H1 (cell line): ENCODE measurements at regions of chr11 and their contacts with region 1.

Region 1: DNA sequence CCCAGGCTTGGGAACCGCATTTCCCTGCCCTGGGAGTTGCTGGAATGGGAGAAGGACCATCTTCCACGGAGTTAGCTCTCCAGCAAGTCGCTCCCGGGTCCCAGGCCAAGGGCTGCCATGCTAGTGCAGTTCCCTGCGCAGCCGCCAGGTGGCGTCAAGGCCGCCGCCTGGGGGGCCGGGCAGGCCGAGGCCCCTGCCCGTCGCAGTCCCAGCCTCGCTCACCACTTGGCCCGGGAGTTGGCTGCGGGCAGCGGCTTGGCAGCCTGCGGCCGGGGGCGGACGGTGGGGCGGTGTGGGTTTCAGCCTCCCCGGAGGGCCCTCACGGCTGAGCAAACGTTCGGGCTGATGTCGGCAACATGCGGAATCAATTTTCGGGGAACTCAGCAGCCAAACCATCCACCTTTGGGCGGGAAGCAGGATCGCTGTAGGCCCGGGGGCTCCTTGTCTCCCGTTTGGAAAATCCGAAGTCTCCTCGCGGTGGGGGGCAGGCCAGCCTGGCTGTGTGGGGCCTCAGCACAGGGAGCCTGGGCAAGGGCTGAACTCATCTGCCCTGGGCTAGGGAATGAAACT is 415.1 kb downstream of the SOX6 start:
- DNase-seq: peak; percentile 65 to 94
- H3K4me3 ChIP-seq: no peak overlapping the region; a peak in 1 of 8 replicates
- H3K27ac ChIP-seq: no peak overlapping the region
- H3K4me1 ChIP-seq: no peaks in the 10 kb centered on the region; a peak in 1 of 7 replicates
- H3K27me3 ChIP-seq: peaks cover 0 to 11% (median 8%) of the 10 kb centered on the region in 4 experiments; a peak in 3 of 7 replicates
- CTCF ChIP-seq: peak; percentile 92 to 96 (median 96)
- EP300 ChIP-seq: peak in 1 of 2 experiments; percentile 48; a peak in 1 of 3 replicates
- POLR2A ChIP-seq: no peak
- RAD21 ChIP-seq: peak; percentile 82 to 90

Region 2: DNA sequence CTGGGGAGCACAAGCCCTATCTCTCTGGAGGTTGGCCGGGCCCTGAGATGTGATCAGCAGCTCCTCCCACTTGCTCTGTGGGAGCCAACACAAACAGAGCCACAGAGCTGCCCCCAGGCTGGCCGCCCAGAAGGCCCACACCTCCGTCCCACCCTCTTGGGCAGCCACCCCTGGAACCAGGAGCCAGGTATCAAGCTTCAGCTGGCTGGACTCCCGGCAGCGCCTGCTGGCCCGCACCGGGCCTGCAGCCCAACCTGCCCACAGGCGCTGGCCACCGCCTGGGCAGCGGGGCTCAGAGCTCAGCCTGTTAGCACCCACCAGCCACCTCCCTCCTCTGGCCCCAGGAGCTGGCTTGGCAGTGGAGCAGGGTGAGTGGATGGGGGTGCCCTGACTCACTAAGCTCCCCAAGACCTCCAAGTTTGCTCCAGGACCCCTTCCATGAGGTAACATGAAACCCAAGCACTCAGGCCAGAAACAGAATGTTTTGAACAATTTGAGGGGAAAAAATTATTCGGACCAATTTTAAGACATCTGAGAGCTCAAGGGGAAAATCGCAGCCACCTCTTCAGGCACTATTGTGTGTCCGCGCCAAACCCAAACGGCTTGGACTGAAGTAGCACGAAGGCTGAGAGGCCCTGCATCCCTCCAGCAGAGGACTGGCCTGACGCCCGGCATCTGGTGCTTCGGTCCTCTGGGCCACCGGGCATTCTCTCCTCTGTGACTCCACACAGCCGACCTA is 35.8 kb before region 1 on chr11:
- CTCF ChIA-PET with region 1: interaction called, 10 read pairs
- POLR2A ChIA-PET with region 1: no interaction called
- DNase-seq: no peak
- H3K4me3 ChIP-seq: no peak overlapping the region
- H3K27ac ChIP-seq: no peak overlapping the region
- H3K4me1 ChIP-seq: no peaks in the 10 kb centered on the region; a peak in 1 of 7 replicates
- H3K27me3 ChIP-seq: no peaks in the 10 kb centered on the region
- CTCF ChIP-seq: no peak
- EP300 ChIP-seq: no peak
- POLR2A ChIP-seq: no peak
- RAD21 ChIP-seq: no peak

Region 3: DNA sequence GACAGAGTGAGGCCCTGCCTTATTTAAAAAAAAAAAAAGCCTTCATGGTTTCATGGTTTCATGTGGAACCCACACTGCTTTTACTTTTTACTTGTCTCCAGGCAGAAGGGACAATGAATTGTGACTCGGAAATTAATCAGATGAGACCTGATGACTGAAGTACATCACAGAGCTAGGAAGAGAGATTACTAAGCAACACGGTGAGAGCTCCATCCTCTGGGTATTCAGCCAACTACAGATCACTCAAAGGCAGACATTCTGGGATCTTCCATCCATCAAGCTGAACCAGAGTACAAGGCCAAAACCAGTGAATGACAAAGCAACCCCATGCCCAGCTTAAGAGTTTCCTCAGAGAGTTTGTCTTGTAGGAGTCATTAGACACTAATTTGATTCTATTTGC is 18.1 kb before region 1 on chr11:
- CTCF ChIA-PET with region 1: interaction called, 14 read pairs
- POLR2A ChIA-PET with region 1: no interaction called
- DNase-seq: no peak
- H3K4me3 ChIP-seq: no peak overlapping the region
- H3K27ac ChIP-seq: no peak overlapping the region
- H3K4me1 ChIP-seq: no peaks in the 10 kb centered on the region
- H3K27me3 ChIP-seq: no peaks in the 10 kb centered on the region; a peak in 1 of 7 replicates
- CTCF ChIP-seq: peak in 2 of 3 experiments; percentile 50 to 53; a peak in 3 of 4 replicates
- EP300 ChIP-seq: no peak
- POLR2A ChIP-seq: no peak
- RAD21 ChIP-seq: peak; percentile 66 to 71

Region 4: GRCh38 chr11:15929371-15929901 is 11.8 kb before region 1 on chr11:
- CTCF ChIA-PET with region 1: interaction called, 16 read pairs
- POLR2A ChIA-PET with region 1: no interaction called
- DNase-seq: no peak
- H3K4me3 ChIP-seq: no peak overlapping the region
- H3K27ac ChIP-seq: no peak overlapping the region
- H3K4me1 ChIP-seq: no peaks in the 10 kb centered on the region
- H3K27me3 ChIP-seq: no peaks in the 10 kb centered on the region
- CTCF ChIP-seq: no peak
- EP300 ChIP-seq: no peak
- POLR2A ChIP-seq: no peak
- RAD21 ChIP-seq: no peak

Region 5: GRCh38 chr11:16082095-16083055 is 141.1 kb after region 1 on chr11:
- CTCF ChIA-PET with region 1: no interaction called
- POLR2A ChIA-PET with region 1: no interaction called
- DNase-seq: no peak
- H3K4me3 ChIP-seq: no peak overlapping the region
- H3K27ac ChIP-seq: no peak overlapping the region
- H3K4me1 ChIP-seq: no peaks in the 10 kb centered on the region
- H3K27me3 ChIP-seq: no peaks in the 10 kb centered on the region
- CTCF ChIP-seq: no peak
- EP300 ChIP-seq: no peak
- POLR2A ChIP-seq: no peak
- RAD21 ChIP-seq: no peak

Region 6: GRCh38 chr11:16613512-16614381 is 672.5 kb after region 1 on chr11:
- CTCF ChIA-PET with region 1: interaction called, 14 read pairs
- POLR2A ChIA-PET with region 1: no interaction called
- DNase-seq: peak; percentile 85 to 92
- H3K4me3 ChIP-seq: peak overlapping the region; percentile 8 to 65 (median 52); a peak in 7 of 8 replicates
- H3K27ac ChIP-seq: no peak overlapping the region
- H3K4me1 ChIP-seq: peaks cover 0 to 13% (median 4%) of the 10 kb centered on the region in 4 experiments; a peak in 5 of 7 replicates
- H3K27me3 ChIP-seq: peaks cover 46 to 73% (median 65%) of the 10 kb centered on the region in 4 experiments
- CTCF ChIP-seq: peak; percentile 84 to 93 (median 87)
- EP300 ChIP-seq: no peak; a peak in 1 of 3 replicates
- POLR2A ChIP-seq: no peak
- RAD21 ChIP-seq: peak; percentile 92 to 93